CD8-positive, alpha-beta T cell (primary cell): ENCODE measurements at regions of chr1 and their contacts with region 1.

Region 1: DNA sequence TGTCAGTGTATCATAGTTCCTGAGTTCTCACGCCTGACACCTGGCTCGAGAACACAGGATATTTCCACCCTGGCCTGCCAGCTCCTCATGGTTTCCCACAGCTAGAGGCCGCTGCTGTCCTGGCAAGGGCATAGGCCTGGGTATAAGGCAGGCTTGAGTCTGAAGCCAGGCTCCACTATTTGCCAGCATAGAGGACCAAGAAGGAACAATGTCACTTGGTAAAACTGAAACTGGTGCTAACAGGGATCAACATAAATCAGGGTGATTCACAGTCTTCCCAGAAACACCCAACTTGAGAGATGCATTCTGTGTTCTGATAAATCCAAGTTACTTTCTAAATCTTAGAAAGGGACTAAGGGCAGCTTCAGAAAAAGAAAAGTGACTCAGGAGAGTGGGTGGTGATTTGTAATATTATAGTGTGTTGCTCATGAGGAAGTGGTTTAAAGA is 6.9 kb upstream of the S100A2 start:
- DNase-seq: peak in 7 of 9 experiments; percentile 27 to 60 (median 39)
- ATAC-seq: peak; percentile 52
- H3K4me3 ChIP-seq: no peak overlapping the region
- H3K4me3 Mint-ChIP-seq: no peak overlapping the region
- H3K27ac ChIP-seq: no peak overlapping the region
- H3K27ac Mint-ChIP-seq: no peak overlapping the region
- H3K4me1 ChIP-seq: peaks cover 3% of the 10 kb centered on the region
- H3K4me1 Mint-ChIP-seq: peaks cover 11% of the 10 kb centered on the region
- H3K27me3 ChIP-seq: no peaks in the 10 kb centered on the region
- H3K27me3 Mint-ChIP-seq: peaks cover 14% of the 10 kb centered on the region
- CTCF ChIP-seq: no peak

Region 2: GRCh38 chr1:153049211-153049610 is 523.4 kb before region 1 on chr1:
- CTCF ChIA-PET with region 1: no interaction called
- POLR2A ChIA-PET with region 1: no interaction called
- intact Hi-C with region 1: no loop called
- DNase-seq: no peak
- ATAC-seq: no peak
- H3K4me3 ChIP-seq: no peak overlapping the region
- H3K4me3 Mint-ChIP-seq: no peak overlapping the region
- H3K27ac ChIP-seq: no peak overlapping the region
- H3K27ac Mint-ChIP-seq: no peak overlapping the region
- H3K4me1 ChIP-seq: no peaks in the 10 kb centered on the region
- H3K4me1 Mint-ChIP-seq: no peaks in the 10 kb centered on the region
- H3K27me3 ChIP-seq: no peaks in the 10 kb centered on the region
- H3K27me3 Mint-ChIP-seq: peaks cover 30% of the 10 kb centered on the region
- CTCF ChIP-seq: no peak

Region 3: DNA sequence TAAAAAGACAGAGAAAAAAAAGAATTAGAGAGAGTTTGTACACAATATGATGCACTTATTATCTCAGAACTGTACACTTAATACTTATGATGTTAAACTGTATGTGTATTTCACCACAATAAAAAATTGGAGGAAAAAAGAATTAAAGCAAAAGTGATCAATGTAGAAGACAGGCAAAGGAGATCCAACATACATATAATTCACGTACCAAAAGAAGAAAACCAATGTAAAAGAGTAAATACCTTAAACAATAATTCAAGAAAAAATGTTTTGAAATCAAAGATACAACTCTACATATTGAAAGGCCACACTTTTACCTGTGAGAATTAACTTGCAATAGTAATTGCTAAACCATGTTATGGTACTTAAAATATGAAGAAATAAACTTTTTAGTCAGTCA is 250.0 kb before region 1 on chr1:
- CTCF ChIA-PET with region 1: no interaction called
- POLR2A ChIA-PET with region 1: no interaction called
- intact Hi-C with region 1: no loop called
- DNase-seq: no peak
- ATAC-seq: no peak
- H3K4me3 ChIP-seq: no peak overlapping the region
- H3K4me3 Mint-ChIP-seq: no peak overlapping the region
- H3K27ac ChIP-seq: no peak overlapping the region
- H3K27ac Mint-ChIP-seq: no peak overlapping the region
- H3K4me1 ChIP-seq: no peaks in the 10 kb centered on the region
- H3K4me1 Mint-ChIP-seq: no peaks in the 10 kb centered on the region
- H3K27me3 ChIP-seq: peaks cover 0 to 2% of the 10 kb centered on the region in 2 experiments
- H3K27me3 Mint-ChIP-seq: peaks cover 9% of the 10 kb centered on the region
- CTCF ChIP-seq: no peak

Region 4: GRCh38 chr1:153352523-153352922 is 220.1 kb before region 1 on chr1:
- CTCF ChIA-PET with region 1: interaction called, 4 read pairs
- POLR2A ChIA-PET with region 1: no interaction called
- intact Hi-C with region 1: loop called in 1 of 2 experiments (anchors 2 kb)
- DNase-seq: peak; percentile 8 to 74 (median 64)
- ATAC-seq: peak; percentile 71
- H3K4me3 ChIP-seq: no peak overlapping the region
- H3K4me3 Mint-ChIP-seq: no peak overlapping the region
- H3K27ac ChIP-seq: no peak overlapping the region
- H3K27ac Mint-ChIP-seq: no peak overlapping the region
- H3K4me1 ChIP-seq: peaks cover 6% of the 10 kb centered on the region
- H3K4me1 Mint-ChIP-seq: peaks cover 12% of the 10 kb centered on the region
- H3K27me3 ChIP-seq: no peaks in the 10 kb centered on the region
- H3K27me3 Mint-ChIP-seq: peaks cover 7% of the 10 kb centered on the region
- CTCF ChIP-seq: peak; percentile 93

Region 5: DNA sequence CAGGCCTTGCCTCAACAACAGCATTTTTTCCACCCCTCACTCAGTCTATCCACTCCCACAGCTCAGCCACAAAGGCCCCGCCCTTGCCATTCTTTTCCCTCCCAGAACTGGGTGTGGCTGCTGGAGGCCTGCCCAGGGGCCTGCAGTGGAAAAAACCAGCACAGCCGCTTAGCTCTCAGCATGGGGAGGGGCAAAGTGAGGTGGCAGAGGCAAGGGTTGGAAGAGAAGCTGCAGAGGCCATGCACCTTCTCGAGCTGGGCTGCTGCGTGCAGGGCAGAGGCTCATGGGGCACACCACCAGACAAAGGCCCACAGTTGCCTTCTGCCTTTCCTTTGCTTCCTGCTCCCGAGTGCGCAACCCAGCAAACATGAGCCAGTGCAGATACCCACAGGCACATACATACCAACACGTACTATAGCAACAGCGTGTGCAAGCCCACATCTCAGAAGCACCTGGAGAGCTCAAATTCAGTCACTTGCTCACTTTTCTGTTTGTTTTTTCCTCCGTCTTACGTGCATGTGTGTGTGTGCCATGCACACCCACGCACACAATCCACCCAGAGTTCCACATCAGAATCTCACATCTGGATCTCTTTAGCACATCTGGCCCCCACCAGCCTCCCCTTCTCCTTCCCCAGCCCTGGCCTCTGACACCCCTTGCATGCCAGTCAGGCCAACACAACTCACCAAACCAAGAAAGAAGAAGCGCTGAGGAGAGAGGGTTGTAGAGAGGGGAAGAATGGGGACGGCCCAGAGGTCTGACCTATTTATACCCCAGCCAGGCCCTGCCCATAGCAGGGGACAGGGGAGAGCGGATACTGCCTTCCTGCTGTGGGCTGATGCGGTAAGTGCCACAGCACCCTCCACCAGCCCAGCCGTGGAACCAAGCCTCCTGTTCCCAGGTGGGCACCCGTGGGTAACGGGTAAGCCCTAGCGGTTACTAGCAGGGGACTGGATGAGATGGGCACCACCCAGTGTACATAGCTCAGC is 27.2 kb before region 1 on chr1 and contains the start of gene S100A4:
- CTCF ChIA-PET with region 1: interaction called, 41 read pairs
- POLR2A ChIA-PET with region 1: interaction called, 7 read pairs
- intact Hi-C with region 1: loop called (anchors 1 to 2 kb)
- DNase-seq: peak; percentile 47 to 91 (median 83)
- ATAC-seq: peak; percentile 74
- H3K4me3 ChIP-seq: peak within 1 kb of the TSS; percentile 56 to 64
- H3K4me3 Mint-ChIP-seq: peak within 1 kb of the TSS; percentile 87
- H3K27ac ChIP-seq: peak within 1 kb of the TSS; percentile 66 to 69
- H3K27ac Mint-ChIP-seq: peak within 1 kb of the TSS; percentile 91
- H3K4me1 ChIP-seq: peaks cover 65% of the 10 kb centered on the region
- H3K4me1 Mint-ChIP-seq: peaks cover 66% of the 10 kb centered on the region
- H3K27me3 ChIP-seq: no peaks in the 10 kb centered on the region
- H3K27me3 Mint-ChIP-seq: no peaks in the 10 kb centered on the region
- CTCF ChIP-seq: no peak
- total RNA-seq, gene S100A4: 172 to 177 TPM

Region 6: DNA sequence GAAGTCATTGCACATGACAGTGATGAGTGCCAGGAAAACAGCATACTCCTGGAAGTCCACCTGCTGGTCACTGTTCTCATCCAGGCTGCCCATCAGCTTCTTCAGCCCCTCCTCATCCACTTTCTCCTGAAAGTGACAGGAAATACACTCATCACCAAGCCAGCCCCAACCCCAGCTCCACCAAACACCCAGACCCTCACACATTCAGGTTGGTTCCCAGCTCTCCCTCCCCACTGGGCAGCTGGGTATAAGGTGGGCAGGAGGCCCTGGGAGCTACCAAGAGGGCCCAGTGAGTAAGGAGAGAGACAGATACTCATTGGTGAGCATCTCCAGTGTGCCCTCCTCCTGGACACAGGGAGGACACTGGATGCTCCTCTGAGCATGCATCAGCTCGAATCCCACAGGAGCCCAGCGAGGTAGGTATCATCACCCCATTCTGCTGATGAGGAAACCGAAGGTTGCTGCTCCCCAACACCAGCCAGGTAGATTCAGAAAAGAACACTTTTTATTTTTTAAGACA is 11.1 kb before region 1 on chr1:
- CTCF ChIA-PET with region 1: interaction called, 10 read pairs
- POLR2A ChIA-PET with region 1: no interaction called
- intact Hi-C with region 1: no loop called
- DNase-seq: no peak
- ATAC-seq: no peak
- H3K4me3 ChIP-seq: no peak overlapping the region
- H3K4me3 Mint-ChIP-seq: no peak overlapping the region
- H3K27ac ChIP-seq: no peak overlapping the region
- H3K27ac Mint-ChIP-seq: no peak overlapping the region
- H3K4me1 ChIP-seq: peaks cover 11% of the 10 kb centered on the region
- H3K4me1 Mint-ChIP-seq: peaks cover 7% of the 10 kb centered on the region
- H3K27me3 ChIP-seq: no peaks in the 10 kb centered on the region
- H3K27me3 Mint-ChIP-seq: no peaks in the 10 kb centered on the region
- CTCF ChIP-seq: no peak

Region 7: DNA sequence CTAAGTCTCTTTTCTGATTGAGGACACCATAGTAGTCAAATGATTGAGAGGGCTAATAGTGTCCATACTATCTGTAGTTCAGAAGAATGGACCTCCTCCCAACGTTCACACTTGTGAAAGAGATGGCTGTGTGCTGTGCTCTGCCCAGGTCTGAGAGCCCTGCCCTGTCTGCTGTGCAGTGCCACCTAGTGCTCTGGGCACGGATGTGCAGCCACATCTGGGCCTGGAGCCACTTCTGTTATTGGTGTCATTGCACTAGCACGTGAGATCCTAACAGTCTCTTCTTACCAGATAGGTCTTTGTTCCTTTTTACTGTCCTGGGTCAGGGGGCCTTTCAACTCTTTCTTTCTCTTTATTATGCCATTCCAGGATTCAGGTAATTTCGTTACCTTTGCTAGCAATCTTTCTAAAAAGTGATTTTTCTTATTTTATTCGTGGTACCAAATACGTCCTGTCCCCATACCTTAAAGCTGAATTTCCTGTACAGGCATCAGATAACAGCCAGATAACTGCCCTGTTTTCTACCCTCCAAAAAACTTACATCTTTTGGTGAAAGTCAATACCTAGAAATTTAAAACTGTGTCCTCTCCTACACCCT is 176.9 kb after region 1 on chr1:
- CTCF ChIA-PET with region 1: interaction called, 6 read pairs
- POLR2A ChIA-PET with region 1: no interaction called
- intact Hi-C with region 1: loop called (anchors 1 to 2 kb)
- DNase-seq: peak; percentile 66 to 85 (median 77)
- ATAC-seq: peak; percentile 100
- H3K4me3 ChIP-seq: no peak overlapping the region
- H3K4me3 Mint-ChIP-seq: no peak overlapping the region
- H3K27ac ChIP-seq: no peak overlapping the region
- H3K27ac Mint-ChIP-seq: no peak overlapping the region
- H3K4me1 ChIP-seq: no peaks in the 10 kb centered on the region
- H3K4me1 Mint-ChIP-seq: peaks cover 4% of the 10 kb centered on the region
- H3K27me3 ChIP-seq: no peaks in the 10 kb centered on the region
- H3K27me3 Mint-ChIP-seq: no peaks in the 10 kb centered on the region
- CTCF ChIP-seq: peak; percentile 97